ENCODE measurements at regions of chr5 and their contacts with region 1.

Region 1: GRCh38 chr5:134738133-134738962 is at the start of gene CAMLG:
- DNase-seq: peak; percentile 97
- ATAC-seq: peak; percentile 97
- H3K4me3 ChIP-seq: peak within 1 kb of the TSS; percentile 96
- H3K27ac ChIP-seq: peak within 1 kb of the TSS; percentile 75
- H3K4me1 ChIP-seq: peaks cover 3% of the 10 kb centered on the region; the same call in 1 of the 2 replicates
- H3K27me3 ChIP-seq: no peaks in the 10 kb centered on the region
- CTCF ChIP-seq: peak; percentile 64
- POLR2A ChIP-seq: peak; percentile 90
- RAD21 ChIP-seq: peak; percentile 42
- total RNA-seq, gene CAMLG: 13.1 and 24.7 TPM in 2 replicates

Region 2: DNA sequence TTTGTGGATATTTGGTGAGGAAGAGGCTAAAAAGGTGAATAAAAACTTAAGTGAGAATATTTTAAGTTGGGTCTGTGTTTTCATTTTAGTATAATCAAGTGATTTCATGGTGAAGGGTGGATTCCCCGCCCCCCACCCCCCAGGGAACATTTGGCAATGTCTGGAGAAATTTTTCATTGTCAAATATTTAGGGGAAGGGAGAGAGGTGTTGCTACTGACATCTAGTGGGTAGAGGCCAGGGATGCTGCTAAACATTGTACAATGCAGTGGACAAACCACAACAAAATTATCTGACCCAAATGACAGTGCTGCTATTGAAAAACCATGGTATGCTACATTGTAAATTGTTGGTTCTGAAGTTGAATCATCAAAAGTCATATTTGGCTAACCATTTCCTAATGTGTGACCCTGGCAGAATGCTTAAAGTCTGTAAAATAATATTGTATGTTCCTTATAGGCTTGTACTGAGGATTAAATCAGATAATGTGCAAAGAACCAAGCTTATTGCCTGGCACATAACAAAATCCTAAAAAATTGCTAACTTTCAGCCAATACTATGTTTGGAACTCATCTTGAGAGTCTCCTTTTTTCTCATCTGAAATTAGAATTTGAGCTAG is 113.1 kb after region 1 on chr5:
- CTCF ChIA-PET with region 1: no interaction called
- POLR2A ChIA-PET with region 1: interaction called, 3 read pairs
- dilution Hi-C with region 1: no loop called
- in situ Hi-C with region 1: no loop called
- intact Hi-C with region 1: loop called (anchors 1 kb)
- DNase-seq: peak; percentile 56
- ATAC-seq: peak; percentile 53; the same call in 1 of the 2 replicates
- H3K4me3 ChIP-seq: no peak overlapping the region
- H3K27ac ChIP-seq: peak overlapping the region; percentile 53; the same call in 1 of the 2 replicates
- H3K4me1 ChIP-seq: peaks cover 9% of the 10 kb centered on the region
- H3K27me3 ChIP-seq: no peaks in the 10 kb centered on the region
- CTCF ChIP-seq: peak; percentile 63
- POLR2A ChIP-seq: no peak
- RAD21 ChIP-seq: peak; percentile 70

Region 3: DNA sequence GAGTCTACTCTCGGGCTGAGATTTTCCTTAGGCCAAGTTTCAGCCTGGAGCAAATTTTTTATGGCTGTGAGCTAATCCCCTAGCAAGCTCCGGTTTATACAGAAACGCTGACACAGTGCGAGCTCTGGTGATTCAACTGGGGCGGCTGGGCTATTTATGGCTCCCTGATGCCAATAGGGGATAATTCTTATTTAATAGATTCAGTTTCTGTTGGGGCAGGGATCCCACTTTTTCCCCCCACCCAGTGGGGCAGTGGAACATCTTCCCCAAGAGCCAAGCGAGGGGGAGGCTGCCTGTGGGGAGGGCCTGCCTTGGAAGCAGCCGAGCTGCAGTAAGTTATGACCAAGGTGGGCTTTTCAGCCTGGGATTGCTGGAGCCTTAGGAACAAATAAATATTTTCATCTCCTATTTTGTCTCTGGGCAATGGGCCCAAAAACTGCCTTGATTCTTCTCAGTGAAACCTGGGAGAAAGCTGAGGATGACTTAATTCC is 531.6 kb after region 1 on chr5:
- CTCF ChIA-PET with region 1: no interaction called
- POLR2A ChIA-PET with region 1: no interaction called
- dilution Hi-C with region 1: no loop called
- in situ Hi-C with region 1: no loop called
- intact Hi-C with region 1: loop called (anchors 5 kb)
- DNase-seq: peak; percentile 89
- ATAC-seq: peak; percentile 84
- H3K4me3 ChIP-seq: no peak overlapping the region
- H3K27ac ChIP-seq: peak overlapping the region; percentile 92
- H3K4me1 ChIP-seq: peaks cover 41% of the 10 kb centered on the region
- H3K27me3 ChIP-seq: no peaks in the 10 kb centered on the region
- CTCF ChIP-seq: no peak
- POLR2A ChIP-seq: no peak
- RAD21 ChIP-seq: no peak

Measured in IMR-90 (cell line).